ENCODE measurements at regions of chr6 and their contacts with region 1.

Region 1: GRCh38 chr6:52419809-52420670 is at the start of gene EFHC1:
- DNase-seq: peak; percentile 100
- total RNA-seq, gene EFHC1: 12.0 to 13.5 TPM

Region 2: DNA sequence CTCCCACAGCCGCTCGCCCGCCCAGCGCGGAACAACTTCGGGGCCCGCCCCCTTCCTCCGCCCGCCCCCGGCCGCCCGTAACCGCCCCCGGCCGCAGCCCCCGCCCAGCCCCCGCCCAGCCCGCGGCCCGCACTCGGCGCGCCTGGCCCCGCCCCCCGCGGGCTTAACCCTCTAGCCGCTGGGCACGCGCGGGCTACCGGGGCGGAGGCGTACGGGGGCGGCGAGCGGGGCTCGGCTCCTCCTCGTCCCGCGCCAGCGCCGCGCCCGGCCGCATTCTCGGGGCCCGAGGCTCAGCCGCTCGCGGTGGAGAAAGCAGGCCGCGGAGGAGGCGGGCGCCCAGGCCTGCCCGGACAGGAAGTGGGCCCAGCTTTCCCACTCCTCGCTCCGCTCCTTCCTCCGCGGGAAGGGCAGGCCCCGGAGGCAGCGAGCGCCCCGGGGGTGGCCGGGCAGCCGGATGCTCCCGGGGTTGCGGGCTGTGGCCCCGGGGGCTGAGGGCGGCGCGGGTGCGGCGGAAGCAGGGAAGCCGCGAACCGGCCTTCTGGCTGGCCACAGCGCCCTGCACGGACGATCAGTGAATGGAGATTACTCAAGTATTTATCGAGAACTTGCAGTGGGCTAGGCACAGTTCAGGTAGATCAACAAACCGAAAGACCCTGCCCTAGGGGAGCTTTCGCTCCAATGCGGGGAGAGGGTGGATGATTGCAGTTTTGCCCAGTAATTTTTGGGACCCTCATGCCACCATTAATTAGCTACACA is 157.2 kb after region 1 on chr6 and contains the start of gene TRAM2:
- intact Hi-C with region 1: loop called in 1 of 2 experiments (anchors 10 kb)
- DNase-seq: peak; percentile 92
- total RNA-seq, gene TRAM2: 40.8 to 46.9 TPM

Region 3: GRCh38 chr6:52591832-52592231 is 171.8 kb after region 1 on chr6:
- intact Hi-C with region 1: loop called (anchors 2 to 5 kb)
- DNase-seq: no peak

Region 4: DNA sequence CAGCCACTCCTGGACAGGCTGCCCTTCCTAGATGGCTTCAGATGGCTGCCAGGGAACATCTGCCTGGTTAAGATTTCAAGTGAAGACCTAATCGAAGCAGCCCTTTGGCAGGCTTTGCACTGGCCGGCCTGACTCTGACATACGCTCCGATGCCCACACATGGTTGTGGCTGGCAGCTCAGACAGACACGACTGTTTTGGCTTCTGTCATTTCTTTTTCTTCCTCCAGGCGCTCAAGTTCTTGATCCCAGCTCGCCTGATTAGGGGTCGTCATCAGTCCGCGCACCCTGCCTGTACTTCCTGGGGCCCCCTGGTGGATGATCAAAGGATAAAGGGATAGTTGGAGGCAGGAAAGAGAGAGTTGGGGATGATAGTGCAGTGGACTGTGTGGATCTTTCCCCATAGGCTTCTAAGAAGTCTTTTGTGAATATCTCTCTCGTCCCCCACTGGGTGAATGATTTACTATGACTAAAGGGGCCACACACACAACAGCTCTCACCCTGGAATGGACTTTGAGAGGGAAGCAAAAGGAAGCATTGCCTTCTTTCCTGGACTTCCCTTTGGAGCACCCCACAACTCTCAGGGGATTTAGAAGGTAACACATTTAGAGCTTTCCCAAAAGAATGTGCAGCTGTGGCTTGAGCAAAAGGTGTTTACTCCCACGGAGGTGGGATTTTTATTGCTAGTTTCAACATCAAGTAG is 178.2 kb after region 1 on chr6:
- intact Hi-C with region 1: loop called (anchors 2 to 5 kb)
- DNase-seq: peak; percentile 86

Region 5: DNA sequence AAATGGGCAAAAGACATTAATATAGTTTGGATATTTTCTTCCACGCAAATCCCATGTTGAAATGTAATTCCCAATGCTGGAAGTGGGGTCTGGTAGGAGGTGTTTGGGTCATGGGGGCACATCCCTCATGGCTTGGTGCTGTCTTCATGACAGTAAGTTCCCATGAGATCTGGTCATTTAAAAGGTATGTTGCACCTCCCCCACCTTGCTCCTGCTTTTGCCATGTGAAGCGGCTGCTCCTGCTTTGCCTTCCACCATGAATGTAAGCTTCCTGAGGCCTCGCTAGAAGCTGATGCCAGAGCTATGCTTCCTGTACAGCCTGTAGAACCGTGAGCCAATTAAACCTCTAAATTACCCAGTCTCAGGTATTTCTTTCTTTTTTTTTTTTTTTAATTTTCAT is 234.6 kb after region 1 on chr6:
- intact Hi-C with region 1: loop called in 1 of 2 experiments (anchors 2 kb)
- DNase-seq: no peak

Region 6: GRCh38 chr6:52664186-52664990 is 244.3 kb after region 1 on chr6:
- intact Hi-C with region 1: loop called in 1 of 2 experiments (anchors 5 kb)
- DNase-seq: peak; percentile 95